A673 (cell line): ENCODE measurements at regions of chr6 and their contacts with region 1.

Region 1: DNA sequence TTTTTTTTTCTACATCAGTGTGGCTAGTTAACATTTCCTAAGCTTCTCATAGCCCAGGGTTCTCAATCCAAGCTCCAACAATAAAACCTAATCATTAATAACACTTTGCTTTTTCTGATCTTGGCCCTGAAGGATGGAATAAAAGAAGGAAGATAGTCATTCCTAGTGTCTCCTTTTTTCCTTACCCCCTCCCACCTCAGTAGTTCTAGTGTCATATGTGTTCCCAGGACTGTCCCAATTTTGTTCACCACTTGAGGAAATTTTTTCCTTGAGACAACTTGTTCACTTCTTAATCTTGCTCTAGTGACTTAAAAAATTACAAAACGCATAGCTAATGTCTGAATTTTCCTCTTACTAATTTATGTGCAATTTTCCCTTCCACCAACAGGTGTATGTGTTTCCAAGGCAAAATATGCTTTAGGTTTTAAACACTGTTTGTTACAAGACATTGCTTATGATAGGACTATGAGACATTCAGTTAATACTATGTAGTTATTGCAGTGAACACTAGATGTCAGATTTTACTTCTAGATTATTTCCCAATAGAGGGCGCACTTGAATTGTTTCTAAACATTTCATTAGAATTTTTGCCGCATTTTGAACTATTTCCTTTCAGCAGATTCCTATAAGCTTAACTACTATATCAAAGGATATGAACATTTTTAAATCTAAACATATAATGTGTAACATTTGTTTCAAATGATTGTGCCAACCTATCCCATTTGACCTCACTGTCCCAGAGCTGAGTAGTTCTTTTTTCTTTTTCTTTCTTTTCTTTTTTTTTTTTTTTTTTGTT is 18.5 kb upstream of the C6orf141 start:
- DNase-seq: peak; percentile 83
- H3K4me3 ChIP-seq: peak overlapping the region; percentile 7
- H3K27ac ChIP-seq: no peak overlapping the region
- H3K4me1 ChIP-seq: peaks cover 7% of the 10 kb centered on the region
- H3K27me3 ChIP-seq: no peaks in the 10 kb centered on the region
- CTCF ChIP-seq: peak; percentile 97

Region 2: DNA sequence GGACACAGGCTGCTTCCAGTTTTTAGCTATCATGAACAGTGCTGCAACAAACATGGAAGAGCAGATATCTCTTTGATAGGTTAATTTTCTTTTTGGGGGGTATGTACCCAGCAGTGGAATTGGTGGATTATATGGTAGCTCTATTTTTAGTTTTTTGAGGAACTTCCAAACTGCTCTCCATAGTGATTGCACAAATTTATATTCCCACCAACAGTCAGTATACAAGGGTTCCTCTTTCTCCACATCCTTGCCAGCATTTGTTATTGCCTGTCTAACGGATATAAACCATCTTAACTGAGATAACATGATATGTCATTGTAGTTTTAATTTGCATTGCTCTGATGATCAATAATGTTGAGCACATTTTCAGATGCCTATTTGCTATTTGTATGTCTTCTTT is 306.5 kb before region 1 on chr6:
- CTCF ChIA-PET with region 1: no interaction called
- POLR2A ChIA-PET with region 1: no interaction called
- intact Hi-C with region 1: no loop called
- DNase-seq: no peak
- H3K4me3 ChIP-seq: no peak overlapping the region
- H3K27ac ChIP-seq: no peak overlapping the region
- H3K4me1 ChIP-seq: no peaks in the 10 kb centered on the region
- H3K27me3 ChIP-seq: no peaks in the 10 kb centered on the region
- CTCF ChIP-seq: no peak

Region 3: DNA sequence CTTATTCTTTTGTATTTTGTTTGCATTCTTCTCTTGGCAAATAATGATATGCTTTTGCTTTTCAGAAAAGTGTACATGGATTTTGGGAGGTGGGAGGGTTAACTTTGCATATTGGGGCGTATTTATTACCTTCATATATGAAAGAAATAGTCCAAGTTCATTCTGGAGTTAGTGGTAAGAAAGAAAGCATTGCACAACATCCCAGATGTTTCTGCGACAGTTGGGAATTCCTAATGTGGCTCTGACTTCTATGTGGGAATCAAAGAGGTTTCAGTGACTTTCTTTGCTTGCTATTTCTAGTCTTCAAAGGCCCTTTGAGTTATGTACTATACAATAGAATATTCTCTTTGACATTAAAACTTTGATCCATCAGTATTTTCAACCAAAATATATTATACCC is 147.1 kb before region 1 on chr6:
- CTCF ChIA-PET with region 1: no interaction called
- POLR2A ChIA-PET with region 1: no interaction called
- intact Hi-C with region 1: no loop called
- DNase-seq: no peak
- H3K4me3 ChIP-seq: no peak overlapping the region
- H3K27ac ChIP-seq: no peak overlapping the region
- H3K4me1 ChIP-seq: no peaks in the 10 kb centered on the region
- H3K27me3 ChIP-seq: no peaks in the 10 kb centered on the region
- CTCF ChIP-seq: no peak

Region 4: GRCh38 chr6:49570474-49571079 is 38.6 kb after region 1 on chr6:
- CTCF ChIA-PET with region 1: interaction called, 5 read pairs
- POLR2A ChIA-PET with region 1: interaction called, 12 read pairs
- intact Hi-C with region 1: no loop called
- DNase-seq: peak; percentile 67
- H3K4me3 ChIP-seq: no peak overlapping the region
- H3K27ac ChIP-seq: no peak overlapping the region
- H3K4me1 ChIP-seq: peaks cover 11% of the 10 kb centered on the region
- H3K27me3 ChIP-seq: no peaks in the 10 kb centered on the region
- CTCF ChIP-seq: peak; percentile 51; the same call in 1 of the 2 replicates

Region 5: GRCh38 chr6:49606696-49607390 is 74.9 kb after region 1 on chr6:
- CTCF ChIA-PET with region 1: interaction called, 32 read pairs
- POLR2A ChIA-PET with region 1: no interaction called
- intact Hi-C with region 1: loop called (anchors 1 kb)
- DNase-seq: peak; percentile 95
- H3K4me3 ChIP-seq: peak overlapping the region; percentile 7
- H3K27ac ChIP-seq: no peak overlapping the region
- H3K4me1 ChIP-seq: peaks cover 5% of the 10 kb centered on the region
- H3K27me3 ChIP-seq: no peaks in the 10 kb centered on the region
- CTCF ChIP-seq: peak; percentile 93

Region 6: GRCh38 chr6:49618257-49618656 is 86.3 kb after region 1 on chr6:
- CTCF ChIA-PET with region 1: interaction called, 11 read pairs
- POLR2A ChIA-PET with region 1: no interaction called
- intact Hi-C with region 1: no loop called
- DNase-seq: no peak
- H3K4me3 ChIP-seq: no peak overlapping the region
- H3K27ac ChIP-seq: no peak overlapping the region
- H3K4me1 ChIP-seq: no peaks in the 10 kb centered on the region
- H3K27me3 ChIP-seq: no peaks in the 10 kb centered on the region
- CTCF ChIP-seq: no peak

Region 7: DNA sequence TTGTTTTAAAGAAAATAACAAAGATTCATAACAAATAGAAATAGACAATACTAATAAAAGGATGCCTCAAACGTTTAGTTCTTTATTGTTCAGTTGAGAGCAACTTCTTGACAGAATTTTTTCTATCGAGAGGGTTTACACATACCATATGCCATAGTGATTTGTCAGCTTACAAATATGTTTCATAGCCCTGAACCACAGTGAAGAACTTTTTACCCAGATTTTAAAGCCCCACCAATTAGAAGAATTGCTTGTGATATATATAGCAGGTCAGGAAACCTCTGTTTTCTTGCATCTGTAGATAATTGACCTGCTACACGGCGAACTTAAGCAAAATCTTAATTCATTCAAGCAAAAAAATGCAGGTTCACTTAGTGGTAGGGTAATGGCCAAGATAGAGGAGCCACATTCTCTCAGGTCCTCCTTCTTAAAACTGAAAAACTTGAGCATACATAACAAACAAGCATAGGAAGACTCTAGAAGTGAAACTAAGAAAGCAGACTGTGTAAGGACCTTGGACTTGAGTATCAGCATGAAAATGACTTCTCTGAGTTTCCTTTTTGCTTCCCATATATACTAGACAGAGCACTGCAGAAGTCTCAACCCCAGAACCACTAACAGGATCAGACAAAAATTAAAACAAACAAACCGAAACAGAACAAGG is 294.9 kb after region 1 on chr6:
- CTCF ChIA-PET with region 1: no interaction called
- POLR2A ChIA-PET with region 1: no interaction called
- intact Hi-C with region 1: no loop called
- DNase-seq: no peak
- H3K4me3 ChIP-seq: no peak overlapping the region
- H3K27ac ChIP-seq: no peak overlapping the region
- H3K4me1 ChIP-seq: no peaks in the 10 kb centered on the region
- H3K27me3 ChIP-seq: peaks cover 3% of the 10 kb centered on the region
- CTCF ChIP-seq: no peak

Region 8: DNA sequence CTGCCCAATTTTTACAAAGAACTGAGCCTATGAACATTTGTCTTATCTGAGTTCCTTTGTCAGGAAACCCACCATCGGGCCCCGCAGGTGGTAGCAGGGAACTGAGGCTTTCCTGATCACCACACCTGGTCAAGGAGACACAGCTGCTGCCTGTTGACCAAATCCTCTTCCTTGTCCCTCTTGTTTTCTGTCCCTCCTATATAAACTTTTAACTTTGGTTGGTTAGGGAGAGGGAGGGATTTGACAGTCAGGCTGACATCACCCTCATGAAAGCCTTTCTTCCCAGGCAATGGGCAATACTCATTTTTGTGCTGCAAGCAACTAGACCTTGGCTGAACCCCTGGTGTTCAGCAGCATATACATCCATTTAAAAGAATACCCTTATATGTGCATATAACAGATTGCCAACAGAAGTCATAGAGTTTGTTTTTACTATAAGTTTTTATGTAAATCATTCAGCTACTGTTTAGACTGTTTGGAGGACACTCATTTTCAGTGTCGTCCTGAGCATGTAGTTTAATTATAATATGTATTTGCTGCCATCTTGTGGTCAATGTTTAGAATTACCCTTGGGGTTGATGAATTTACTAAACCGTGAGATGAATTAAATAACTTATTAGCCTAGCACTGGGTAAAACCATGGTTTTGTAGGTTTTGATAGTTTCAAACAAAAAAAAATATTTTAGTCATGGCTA is 317.4 kb after region 1 on chr6:
- CTCF ChIA-PET with region 1: interaction called, 8 read pairs
- POLR2A ChIA-PET with region 1: no interaction called
- intact Hi-C with region 1: loop called (anchors 1 kb)
- DNase-seq: peak; percentile 83
- H3K4me3 ChIP-seq: no peak overlapping the region
- H3K27ac ChIP-seq: no peak overlapping the region
- H3K4me1 ChIP-seq: no peaks in the 10 kb centered on the region
- H3K27me3 ChIP-seq: no peaks in the 10 kb centered on the region
- CTCF ChIP-seq: peak; percentile 62